ENCODE measurements at regions of chr14 and their contacts with region 1.

Region 1: DNA sequence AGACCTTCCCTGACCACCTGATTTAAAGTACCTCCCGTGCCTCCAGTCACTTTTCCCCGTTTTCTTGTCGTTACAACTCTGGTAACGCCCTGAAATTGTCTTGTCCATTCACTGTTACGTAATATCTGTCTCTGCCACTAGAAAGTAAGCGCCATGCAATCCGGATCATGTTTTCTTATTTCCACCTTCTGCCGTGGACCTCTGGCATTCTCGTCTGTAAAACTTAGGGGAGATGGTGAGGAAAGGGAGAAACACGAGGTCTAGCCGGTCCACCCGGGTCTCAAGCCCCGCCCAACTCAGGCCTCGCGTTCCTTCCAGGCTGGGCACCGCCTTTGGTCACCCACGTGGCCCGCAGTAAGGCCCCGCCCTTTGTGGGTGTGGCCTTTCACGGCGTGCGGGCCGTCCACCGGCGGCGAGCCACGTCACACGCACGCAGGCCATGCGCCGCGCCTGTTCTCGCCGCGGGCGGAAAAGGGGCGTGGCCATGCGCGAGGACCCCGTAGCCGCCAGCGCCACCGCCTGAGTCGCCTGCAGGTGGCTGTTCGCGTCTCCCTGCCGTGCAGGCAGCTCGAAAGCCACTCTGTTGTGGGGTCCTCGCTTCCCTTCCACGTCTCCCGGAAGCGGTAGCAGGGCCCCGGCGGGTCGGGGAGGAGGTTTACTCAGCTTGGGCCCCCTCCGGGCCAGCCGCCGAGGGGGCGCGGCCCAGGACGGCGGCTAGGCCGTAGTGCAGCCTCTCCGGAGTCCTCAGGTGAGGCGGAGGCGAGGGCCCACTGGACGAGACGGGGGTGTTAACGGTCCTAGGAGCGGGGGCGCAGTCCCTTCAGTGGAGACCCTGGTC is at the start of gene GOLGA5:
- DNase-seq: peak; percentile 100
- H3K4me3 Mint-ChIP-seq: peak within 1 kb of the TSS; percentile 98
- H3K27ac Mint-ChIP-seq: peak within 1 kb of the TSS; percentile 92
- H3K4me1 Mint-ChIP-seq: peaks cover 20% of the 10 kb centered on the region
- H3K27me3 Mint-ChIP-seq: peaks cover 6% of the 10 kb centered on the region
- total RNA-seq, gene GOLGA5: 20.1 and 20.8 TPM in 2 replicates

Region 2: GRCh38 chr14:92106143-92106926 is 687.6 kb before region 1 on chr14 and contains the start of gene ATXN3:
- intact Hi-C with region 1: loop called (anchors 5 kb)
- DNase-seq: peak; percentile 98
- H3K4me3 Mint-ChIP-seq: peak within 1 kb of the TSS; percentile 89
- H3K27ac Mint-ChIP-seq: peak within 1 kb of the TSS; percentile 89
- H3K4me1 Mint-ChIP-seq: peaks cover 27% of the 10 kb centered on the region
- H3K27me3 Mint-ChIP-seq: no peaks in the 10 kb centered on the region
- total RNA-seq, gene ATXN3: 23.7 and 25.2 TPM in 2 replicates

Region 3: DNA sequence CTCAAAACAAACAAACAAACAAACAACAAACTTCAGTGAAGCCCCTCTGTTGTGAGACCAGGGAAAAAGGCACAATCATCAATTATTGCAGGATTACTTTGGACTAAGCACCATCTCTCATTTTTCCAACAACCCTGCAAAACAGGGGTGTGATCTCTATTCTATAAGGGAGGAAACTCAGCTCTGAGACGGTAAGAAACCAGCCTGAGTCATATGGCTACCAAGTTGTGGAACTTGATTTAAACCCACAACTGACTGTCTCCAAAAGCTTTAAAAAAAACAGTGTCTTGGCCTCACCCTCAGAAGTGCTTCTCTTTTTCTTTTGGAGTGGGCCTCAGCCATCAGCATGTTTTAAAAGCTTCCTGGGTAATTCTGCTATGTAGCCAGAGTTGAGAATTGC is 230.6 kb before region 1 on chr14:
- intact Hi-C with region 1: loop called (anchors 5 kb)
- DNase-seq: peak; percentile 79
- H3K4me3 Mint-ChIP-seq: peak overlapping the region; percentile 30
- H3K27ac Mint-ChIP-seq: peak overlapping the region; percentile 58
- H3K4me1 Mint-ChIP-seq: peaks cover 56% of the 10 kb centered on the region
- H3K27me3 Mint-ChIP-seq: peaks cover 4% of the 10 kb centered on the region

Measured in activated CD4-positive, alpha-beta T cell treated with anti-CD3 and anti-CD28 coated beads, Interleukin-2, amount 10 ng/mL, durations not matched to agents 24 days and 14 days (primary cell).